GM13977 (cell line): ENCODE measurements at regions of chr1 and their contacts with region 1.

Region 1: DNA sequence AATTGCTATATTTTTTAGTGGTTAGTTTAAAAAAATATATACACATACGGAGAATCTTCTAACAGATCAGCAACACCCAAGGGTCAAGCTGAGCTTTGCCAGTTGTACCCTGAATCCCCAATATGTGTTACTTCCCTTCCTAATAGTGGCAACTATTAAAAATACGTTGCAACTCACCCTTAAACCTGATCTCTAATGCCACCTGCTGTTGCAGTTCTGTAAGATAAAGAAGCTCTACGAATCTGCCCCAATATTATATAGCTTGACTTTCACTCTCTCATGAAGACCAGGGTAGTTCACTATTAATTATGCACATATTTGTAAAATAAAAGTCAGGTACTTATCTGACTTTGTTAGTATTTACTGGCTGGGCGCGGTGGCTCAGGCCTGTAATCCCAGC is 58.4 kb downstream of the ASH1L start:
- DNase-seq: peak; percentile 47
- CTCF ChIP-seq: peak; percentile 48

Region 2: DNA sequence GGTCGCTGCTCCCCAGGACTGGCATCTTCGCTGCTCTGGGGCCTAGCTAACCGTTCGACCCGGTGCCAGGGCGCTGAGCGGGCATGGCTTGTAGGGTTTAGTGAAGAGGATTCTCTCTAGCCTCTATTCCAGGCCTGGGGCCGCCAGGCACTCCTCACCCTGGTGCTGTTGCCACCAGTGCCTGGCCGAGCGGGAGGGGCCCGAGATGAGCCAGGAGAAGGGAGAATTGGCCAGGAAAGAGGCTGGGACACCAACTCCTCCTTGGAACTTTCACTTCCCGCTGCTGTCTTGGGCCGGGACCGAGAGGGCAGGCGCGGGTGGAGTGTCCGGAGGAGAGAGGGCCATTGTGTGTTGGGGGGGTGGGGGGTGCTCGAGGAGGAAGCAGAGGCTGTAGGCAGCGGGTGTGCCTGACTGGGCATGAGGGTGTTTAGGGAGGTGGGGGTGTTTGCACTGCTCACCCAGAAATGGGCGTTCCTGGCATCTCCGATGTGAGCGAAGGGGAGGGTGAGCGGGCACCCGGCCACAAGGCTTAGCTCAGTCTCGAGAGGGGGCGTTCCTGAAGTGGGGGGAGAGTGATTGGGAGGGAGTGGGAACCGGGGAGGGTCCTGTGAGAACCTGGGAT is 452.3 kb before region 1 on chr1:
- in situ Hi-C with region 1: no loop called
- DNase-seq: peak; percentile 67
- CTCF ChIP-seq: no peak

Region 3: GRCh38 chr1:155329971-155330598 is 174.1 kb before region 1 on chr1:
- in situ Hi-C with region 1: loop called (anchors 10 kb)
- DNase-seq: no peak
- CTCF ChIP-seq: no peak

Region 4: DNA sequence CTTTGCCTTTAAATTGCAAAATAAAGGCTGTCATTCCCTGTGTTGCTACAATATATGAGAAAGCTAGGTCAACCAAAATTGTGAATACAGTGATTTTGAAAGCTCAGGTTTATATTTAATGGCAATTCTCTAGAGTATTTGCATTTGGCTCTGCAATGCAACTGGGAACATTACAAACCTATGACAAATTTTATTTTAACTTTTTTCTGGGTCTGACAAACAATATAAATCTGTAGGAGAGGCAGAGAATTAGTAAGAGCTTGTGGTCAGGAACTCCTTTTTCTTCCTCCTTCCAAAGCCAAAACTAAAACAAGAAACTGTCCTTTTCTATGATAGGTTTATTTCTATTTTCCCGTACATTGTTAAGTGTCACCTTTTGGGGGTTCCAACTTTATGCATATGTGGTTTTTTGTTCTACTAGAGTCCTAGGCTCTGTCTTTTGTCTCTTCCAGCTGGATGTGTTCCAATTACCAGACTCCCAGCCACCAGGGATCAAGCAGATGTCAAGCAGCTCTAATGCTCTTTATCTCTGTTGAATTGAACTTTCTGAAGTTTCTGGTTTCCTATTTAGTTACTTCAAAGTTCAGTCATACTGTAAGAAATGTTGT is 48.5 kb before region 1 on chr1:
- in situ Hi-C with region 1: no loop called
- DNase-seq: no peak
- CTCF ChIP-seq: no peak